Calu3 (cell line): ENCODE measurements at regions of chr17 and their contacts with region 1.

Region 1: DNA sequence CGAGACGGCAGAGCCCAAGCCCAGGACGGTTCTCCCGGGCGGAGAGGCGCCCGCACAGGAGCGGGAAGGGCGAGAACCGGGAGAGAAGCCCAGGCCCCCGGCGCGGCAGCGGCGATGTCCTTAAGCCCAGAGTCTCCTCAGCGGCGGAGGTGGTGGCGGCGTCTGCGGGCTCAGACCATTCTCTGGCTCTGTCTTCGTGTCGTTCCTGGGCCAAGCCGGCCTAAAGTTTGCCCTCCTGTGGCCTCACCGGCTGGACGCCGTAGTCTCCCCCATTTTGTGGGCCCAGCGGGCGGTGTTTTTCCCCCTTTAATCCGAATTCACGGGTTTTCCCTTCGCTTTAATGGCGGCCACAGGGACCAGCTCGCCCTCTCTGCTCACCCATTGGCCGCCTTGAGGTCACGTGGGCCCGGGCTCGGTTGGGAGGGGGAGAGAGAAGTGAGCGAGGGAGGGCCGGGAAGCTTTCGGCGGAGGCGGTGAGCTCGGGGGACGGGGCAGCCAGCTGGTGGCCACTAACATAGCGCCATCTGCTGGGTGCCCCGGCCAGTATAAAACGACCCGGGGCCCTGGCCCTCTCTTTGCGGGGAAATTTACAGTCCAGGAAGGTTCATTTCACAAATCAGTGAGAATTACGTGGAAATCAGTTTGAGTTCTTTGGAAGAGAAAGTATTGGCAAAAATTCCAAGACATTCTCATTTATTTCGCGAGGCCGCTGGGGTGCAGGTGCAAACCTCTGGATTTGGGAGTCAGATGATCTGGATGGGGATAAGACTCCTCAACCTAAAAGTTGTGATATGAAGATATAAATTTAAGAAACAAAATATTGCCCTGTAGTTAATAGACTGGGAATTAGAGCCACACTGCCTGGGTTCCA is 755 bp upstream of the MED13 start:
- DNase-seq: peak; percentile 95
- H3K4me3 Mint-ChIP-seq: peak overlapping the region; percentile 95
- H3K27ac Mint-ChIP-seq: peak overlapping the region; percentile 90
- H3K4me1 Mint-ChIP-seq: peaks cover 33% of the 10 kb centered on the region
- H3K27me3 Mint-ChIP-seq: no peaks in the 10 kb centered on the region
- CTCF ChIP-seq: peak; percentile 37

Region 2: GRCh38 chr17:61875285-61875684 is 190.5 kb before region 1 on chr17:
- CTCF ChIA-PET with region 1: no interaction called
- intact Hi-C with region 1: loop called (anchors 10 kb)
- DNase-seq: no peak
- H3K4me3 Mint-ChIP-seq: no peak overlapping the region
- H3K27ac Mint-ChIP-seq: no peak overlapping the region
- H3K4me1 Mint-ChIP-seq: no peaks in the 10 kb centered on the region
- H3K27me3 Mint-ChIP-seq: no peaks in the 10 kb centered on the region
- CTCF ChIP-seq: no peak

Region 3: GRCh38 chr17:61997664-61998063 is 68.2 kb before region 1 on chr17:
- CTCF ChIA-PET with region 1: no interaction called
- intact Hi-C with region 1: no loop called
- DNase-seq: no peak
- H3K4me3 Mint-ChIP-seq: no peak overlapping the region
- H3K27ac Mint-ChIP-seq: no peak overlapping the region
- H3K4me1 Mint-ChIP-seq: no peaks in the 10 kb centered on the region
- H3K27me3 Mint-ChIP-seq: no peaks in the 10 kb centered on the region
- CTCF ChIP-seq: no peak

Region 4: DNA sequence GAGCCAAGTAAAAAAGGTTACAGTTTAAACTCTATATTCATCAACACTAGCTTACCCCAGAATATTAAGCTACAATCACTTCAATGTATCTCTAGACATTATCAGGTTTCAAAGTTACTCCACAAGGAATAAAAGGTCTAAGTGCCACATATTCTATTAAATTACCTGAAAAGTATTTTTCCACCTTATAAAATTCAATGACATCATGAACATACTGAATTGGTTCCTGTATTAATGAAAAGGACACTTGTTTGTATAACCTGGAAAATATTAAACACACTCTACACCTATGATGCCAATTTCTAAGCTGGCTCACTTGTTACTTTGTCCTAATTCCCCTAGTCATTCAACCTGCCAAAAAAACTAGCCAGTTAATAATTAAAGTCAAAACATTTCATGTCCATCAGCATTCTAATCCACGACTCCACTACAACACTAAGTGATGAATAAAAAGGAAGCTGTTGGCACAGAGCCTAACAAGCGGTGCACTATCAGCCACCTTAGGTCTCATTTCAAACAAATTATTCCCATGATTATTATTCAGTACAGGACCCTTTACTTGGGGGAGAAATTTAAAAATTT is 13.0 kb before region 1 on chr17:
- CTCF ChIA-PET with region 1: interaction called, 11 read pairs
- intact Hi-C with region 1: no loop called
- DNase-seq: peak; percentile 31
- H3K4me3 Mint-ChIP-seq: no peak overlapping the region
- H3K27ac Mint-ChIP-seq: peak overlapping the region; percentile 71
- H3K4me1 Mint-ChIP-seq: peaks cover 49% of the 10 kb centered on the region
- H3K27me3 Mint-ChIP-seq: no peaks in the 10 kb centered on the region
- CTCF ChIP-seq: no peak

Region 5: DNA sequence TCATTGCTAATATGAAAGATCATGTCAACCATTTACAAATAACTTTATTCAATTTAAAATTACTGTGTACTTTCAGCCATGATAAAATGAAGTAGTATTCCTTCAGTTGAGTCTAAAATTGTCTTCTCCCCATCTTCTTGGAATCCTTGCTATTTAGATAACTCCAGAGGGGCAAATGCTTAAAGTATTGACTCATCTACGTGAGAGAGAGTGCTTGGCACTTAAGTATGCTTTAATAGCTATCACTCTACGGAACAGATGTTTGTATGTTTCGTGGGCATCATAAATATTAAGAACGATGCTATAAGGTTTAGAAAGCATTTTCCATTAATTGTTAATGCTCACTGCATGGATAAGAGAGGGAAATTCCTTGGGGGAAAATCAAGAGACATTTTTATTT is 68.6 kb after region 1 on chr17:
- CTCF ChIA-PET with region 1: no interaction called
- intact Hi-C with region 1: no loop called
- DNase-seq: no peak
- H3K4me3 Mint-ChIP-seq: no peak overlapping the region
- H3K27ac Mint-ChIP-seq: no peak overlapping the region
- H3K4me1 Mint-ChIP-seq: no peaks in the 10 kb centered on the region
- H3K27me3 Mint-ChIP-seq: no peaks in the 10 kb centered on the region
- CTCF ChIP-seq: no peak